Heart right ventricle (tissue), 16 donors: ENCODE measurements at regions of chr5 and their contacts with region 1.

Region 1: DNA sequence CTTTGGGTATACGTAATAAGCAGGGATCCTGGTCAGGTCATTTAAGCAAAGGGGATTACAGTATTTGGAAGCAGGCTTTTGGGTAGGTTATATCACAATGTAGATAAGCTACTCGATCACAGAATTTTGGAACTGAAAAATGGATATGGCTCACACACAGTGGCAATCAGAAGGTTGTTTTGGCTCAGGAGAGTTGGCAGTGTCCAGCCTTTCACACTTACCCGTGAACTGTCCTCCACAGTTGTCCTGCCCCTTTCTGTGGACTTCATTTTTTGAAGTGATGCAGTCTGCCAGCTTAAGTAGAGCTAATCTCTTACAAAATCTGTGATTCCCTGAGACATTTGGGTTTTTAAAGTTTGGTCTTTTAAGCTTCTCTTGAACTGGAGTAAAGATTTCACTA is 30.7 kb downstream of the ICE1 start:
- DNase-seq: no peak
- ATAC-seq: peak in 4 of 8 donors; percentile 37 to 61 (median 41)
- H3K4me3 ChIP-seq: no peak overlapping the region
- H3K27ac ChIP-seq: no peak overlapping the region
- H3K4me1 ChIP-seq: peaks cover 0 to 4% (median 0%) of the 10 kb centered on the region in 9 donors
- H3K27me3 ChIP-seq: no peaks in the 10 kb centered on the region
- CTCF ChIP-seq: no peak

Region 2: GRCh38 chr5:5313101-5313635 is 140.0 kb before region 1 on chr5:
- intact Hi-C with region 1: no loop called
- DNase-seq: no peak
- ATAC-seq: no peak
- H3K4me3 ChIP-seq: no peak overlapping the region
- H3K27ac ChIP-seq: no peak overlapping the region
- H3K4me1 ChIP-seq: peaks cover 0 to 4% (median 0%) of the 10 kb centered on the region in 9 donors
- H3K27me3 ChIP-seq: no peaks in the 10 kb centered on the region
- CTCF ChIP-seq: no peak

Region 3: DNA sequence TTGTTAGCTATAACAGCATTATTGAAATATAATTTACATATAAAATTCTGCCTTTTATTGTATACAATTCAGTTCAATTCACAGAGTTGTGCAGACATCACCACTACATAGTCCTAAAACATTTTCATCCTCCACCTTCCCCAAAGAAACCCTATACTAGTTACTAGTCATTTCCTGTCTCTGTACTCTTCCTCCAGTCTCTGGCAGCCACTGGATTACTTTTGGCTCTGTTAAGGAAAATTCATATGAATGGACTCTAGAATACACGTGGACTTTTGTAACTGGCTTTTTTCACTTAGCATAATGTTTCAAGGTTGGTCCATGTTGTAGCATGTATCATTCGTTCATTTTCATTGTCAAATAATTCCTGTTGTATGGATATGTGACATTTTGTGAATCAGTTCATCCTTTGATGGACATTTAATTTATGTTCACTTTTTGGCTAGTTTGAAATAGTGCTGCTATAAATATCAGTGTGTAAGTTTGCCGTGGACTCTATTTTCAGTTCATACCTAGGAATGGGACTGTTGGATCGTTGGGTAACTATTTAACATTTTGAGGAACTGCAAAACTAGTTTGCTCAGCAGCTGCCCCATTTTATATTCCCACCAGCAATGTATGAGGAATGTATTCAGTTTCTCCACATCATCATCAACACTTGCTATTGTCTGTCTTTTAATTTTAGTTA is 21.0 kb before region 1 on chr5:
- intact Hi-C with region 1: loop called in 1 of 10 experiments (anchors 1 kb)
- DNase-seq: no peak
- ATAC-seq: peak in 1 of 8 donors; percentile 35
- H3K4me3 ChIP-seq: no peak overlapping the region
- H3K27ac ChIP-seq: no peak overlapping the region
- H3K4me1 ChIP-seq: peaks cover 0 to 79% (median 62%) of the 10 kb centered on the region in 9 donors
- H3K27me3 ChIP-seq: no peaks in the 10 kb centered on the region
- CTCF ChIP-seq: no peak

Region 4: DNA sequence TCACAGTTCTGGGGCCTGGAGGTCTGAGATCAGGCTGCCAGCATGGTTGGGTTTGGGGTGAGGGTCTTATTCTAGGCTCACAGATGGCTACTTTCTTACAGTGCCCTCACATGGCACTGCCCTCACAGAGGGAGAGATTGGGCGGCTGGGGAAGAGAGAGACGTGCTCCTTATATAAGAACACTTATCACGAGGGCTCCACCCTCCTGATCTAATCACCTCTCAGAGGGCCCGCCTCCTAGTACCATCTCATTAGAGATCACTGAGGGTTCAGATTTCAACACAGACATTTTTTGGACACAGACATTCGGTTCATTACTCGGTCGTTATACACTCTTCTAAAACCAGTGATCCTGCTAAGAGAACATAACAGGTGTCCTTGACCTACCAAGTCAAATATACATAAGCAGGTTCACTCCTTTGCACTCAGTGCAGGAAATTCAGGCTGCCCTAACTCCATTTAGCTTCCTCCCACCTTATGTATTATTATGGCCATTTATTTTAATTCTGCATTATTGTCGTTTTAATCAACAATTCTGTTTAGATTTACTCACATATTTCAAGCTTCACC is 91.0 kb after region 1 on chr5:
- intact Hi-C with region 1: no loop called
- DNase-seq: no peak
- ATAC-seq: no peak
- H3K4me3 ChIP-seq: no peak overlapping the region
- H3K27ac ChIP-seq: no peak overlapping the region
- H3K4me1 ChIP-seq: peaks cover 0 to 4% (median 0%) of the 10 kb centered on the region in 9 donors
- H3K27me3 ChIP-seq: peaks cover 0 to 4% (median 0%) of the 10 kb centered on the region in 7 donors
- CTCF ChIP-seq: no peak